Mucosa of descending colon (tissue), 3 donors: ENCODE measurements at regions of chr1 and their contacts with region 1.

Region 1: GRCh38 chr1:52002038-52002917 is 11.8 kb upstream of the RAB3B start:
- DNase-seq: peak in 1 of 3 donors; percentile 93
- ATAC-seq: peak; percentile 99
- H3K4me3 ChIP-seq: no peak overlapping the region
- H3K4me1 ChIP-seq: no peaks in the 10 kb centered on the region
- CTCF ChIP-seq: peak; percentile 78

Region 2: GRCh38 chr1:51897699-51898031 is 104.6 kb before region 1 on chr1:
- intact Hi-C with region 1: loop called (anchors 2 kb)
- DNase-seq: no peak
- ATAC-seq: no peak
- H3K4me3 ChIP-seq: no peak overlapping the region
- H3K4me1 ChIP-seq: no peaks in the 10 kb centered on the region
- CTCF ChIP-seq: no peak